ENCODE measurements at regions of chr7 and their contacts with region 1.

Region 1: DNA sequence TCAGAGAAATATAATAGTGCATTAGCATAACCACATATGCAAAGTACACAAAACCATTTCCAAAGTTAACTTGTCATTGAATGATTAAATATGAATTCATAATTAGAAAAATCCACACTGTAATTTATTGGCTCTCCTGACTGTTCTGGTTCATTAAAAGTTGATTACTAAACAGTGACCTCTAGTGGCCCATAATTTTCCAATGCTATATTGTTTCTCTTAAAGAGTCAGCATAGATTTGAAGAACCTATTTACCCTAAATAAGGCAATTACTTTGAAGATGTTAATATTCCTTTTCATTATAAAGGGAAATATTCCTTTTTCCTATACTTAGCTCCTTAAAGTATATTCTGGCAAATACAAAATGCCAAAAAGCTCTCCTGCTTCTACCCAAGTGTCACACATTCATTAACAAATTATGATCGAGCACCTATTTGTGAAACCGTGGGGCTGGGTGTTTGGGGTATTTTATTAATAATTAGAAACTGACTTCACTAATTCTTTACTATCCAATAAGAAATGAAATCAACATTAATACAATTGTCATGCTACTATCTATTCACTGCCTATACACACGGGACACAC is 86.2 kb downstream of the HIBADH start:
- DNase-seq: peak in 1 of 2 experiments; percentile 56
- H3K4me3 ChIP-seq: no peak overlapping the region
- H3K4me3 Mint-ChIP-seq: no peak overlapping the region
- H3K27ac Mint-ChIP-seq: no peak overlapping the region
- H3K4me1 ChIP-seq: peaks cover 12% of the 10 kb centered on the region; the same call in 1 of the 2 replicates
- H3K4me1 Mint-ChIP-seq: no peaks in the 10 kb centered on the region
- H3K27me3 ChIP-seq: no peaks in the 10 kb centered on the region
- H3K27me3 Mint-ChIP-seq: no peaks in the 10 kb centered on the region
- CTCF ChIP-seq: peak; percentile 60 to 62

Region 2: DNA sequence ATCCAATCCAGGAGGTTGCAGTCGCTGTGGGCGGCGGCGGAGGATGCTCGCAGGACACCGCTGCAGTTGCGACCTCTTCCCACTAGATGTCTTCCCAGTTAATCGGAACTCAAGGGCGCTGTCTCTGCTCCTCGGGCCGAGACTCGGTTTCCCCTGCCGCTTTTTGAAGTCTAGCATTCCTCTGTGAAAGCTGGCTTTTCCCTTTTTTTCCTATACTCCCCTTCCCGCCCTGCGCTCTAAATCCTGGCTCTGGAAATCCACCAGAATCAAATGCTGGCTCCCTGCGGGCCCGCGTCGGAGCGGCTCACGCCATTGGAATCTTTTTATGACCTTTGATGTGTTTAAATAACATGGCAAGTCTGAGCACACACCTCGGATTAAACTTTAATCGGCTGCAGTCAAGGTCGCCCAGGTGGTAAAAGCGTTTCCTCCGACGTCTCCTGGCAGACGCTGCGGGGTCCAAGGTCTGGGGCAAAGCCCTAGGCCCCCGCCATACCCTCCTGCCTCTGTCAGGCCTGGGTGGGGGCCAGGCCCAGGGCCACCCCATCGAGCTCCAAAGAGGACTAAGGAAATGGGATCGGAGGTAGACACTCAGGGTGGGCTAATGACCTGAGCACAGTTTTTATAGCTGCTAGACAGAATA is 365.9 kb before region 1 on chr7:
- CTCF ChIA-PET with region 1: interaction called, 3 read pairs
- POLR2A ChIA-PET with region 1: no interaction called
- intact Hi-C with region 1: loop called (anchors 1 kb)
- DNase-seq: peak; percentile 74
- H3K4me3 ChIP-seq: peak overlapping the region; percentile 30
- H3K4me3 Mint-ChIP-seq: peak overlapping the region; percentile 81
- H3K27ac Mint-ChIP-seq: peak overlapping the region; percentile 77
- H3K4me1 ChIP-seq: peaks cover 22% of the 10 kb centered on the region
- H3K4me1 Mint-ChIP-seq: peaks cover 30% of the 10 kb centered on the region
- H3K27me3 ChIP-seq: no peaks in the 10 kb centered on the region
- H3K27me3 Mint-ChIP-seq: peaks cover 2% of the 10 kb centered on the region
- CTCF ChIP-seq: peak; percentile 72 to 80

Region 3: GRCh38 chr7:27235387-27236311 is 340.8 kb before region 1 on chr7:
- CTCF ChIA-PET with region 1: interaction called, 4 read pairs
- POLR2A ChIA-PET with region 1: no interaction called
- intact Hi-C with region 1: loop called (anchors 1 kb)
- DNase-seq: peak; percentile 81 to 86
- H3K4me3 ChIP-seq: peak overlapping the region; percentile 70
- H3K4me3 Mint-ChIP-seq: peak overlapping the region; percentile 77
- H3K27ac Mint-ChIP-seq: peak overlapping the region; percentile 32
- H3K4me1 ChIP-seq: no peaks in the 10 kb centered on the region; the same call in 1 of the 2 replicates
- H3K4me1 Mint-ChIP-seq: no peaks in the 10 kb centered on the region
- H3K27me3 ChIP-seq: no peaks in the 10 kb centered on the region
- H3K27me3 Mint-ChIP-seq: no peaks in the 10 kb centered on the region
- CTCF ChIP-seq: peak; percentile 69 to 79

Region 4: GRCh38 chr7:27434756-27435400 is 141.6 kb before region 1 on chr7:
- CTCF ChIA-PET with region 1: no interaction called
- POLR2A ChIA-PET with region 1: no interaction called
- intact Hi-C with region 1: loop called (anchors 10 kb)
- DNase-seq: no peak
- H3K4me3 ChIP-seq: no peak overlapping the region
- H3K4me3 Mint-ChIP-seq: no peak overlapping the region
- H3K27ac Mint-ChIP-seq: no peak overlapping the region
- H3K4me1 ChIP-seq: no peaks in the 10 kb centered on the region
- H3K4me1 Mint-ChIP-seq: no peaks in the 10 kb centered on the region
- H3K27me3 ChIP-seq: no peaks in the 10 kb centered on the region
- H3K27me3 Mint-ChIP-seq: no peaks in the 10 kb centered on the region
- CTCF ChIP-seq: peak in 1 of 2 experiments; percentile 11